ENCODE measurements at regions of chr7 and their contacts with region 1.

Region 1: GRCh38 chr7:36677769-36678437 is 46.4 kb downstream of the AOAH start:
- DNase-seq: peak in 2 of 5 donors; percentile 10 to 11
- H3K4me3 ChIP-seq: no peak overlapping the region
- H3K4me3 Mint-ChIP-seq: peak overlapping the region in 7 of 8 donors; percentile 55 to 84 (median 68)
- H3K27ac ChIP-seq: no peak overlapping the region
- H3K27ac Mint-ChIP-seq: peak overlapping the region; percentile 79 to 96 (median 89)
- H3K4me1 ChIP-seq: peaks cover 16% of the 10 kb centered on the region
- H3K4me1 Mint-ChIP-seq: peaks cover 18 to 39% (median 28%) of the 10 kb centered on the region in 4 donors
- H3K27me3 ChIP-seq: no peaks in the 10 kb centered on the region
- H3K27me3 Mint-ChIP-seq: no peaks in the 10 kb centered on the region

Region 2: GRCh38 chr7:36653008-36653670 is 24.8 kb before region 1 on chr7:
- CTCF ChIA-PET with region 1: no interaction called
- POLR2A ChIA-PET with region 1: no interaction called
- intact Hi-C with region 1: no loop called
- DNase-seq: no peak
- H3K4me3 ChIP-seq: no peak overlapping the region
- H3K4me3 Mint-ChIP-seq: no peak overlapping the region
- H3K27ac ChIP-seq: no peak overlapping the region
- H3K27ac Mint-ChIP-seq: peak overlapping the region in 1 of 7 donors; percentile 25
- H3K4me1 ChIP-seq: no peaks in the 10 kb centered on the region
- H3K4me1 Mint-ChIP-seq: peaks cover 0 to 22% (median 3%) of the 10 kb centered on the region in 4 donors
- H3K27me3 ChIP-seq: no peaks in the 10 kb centered on the region
- H3K27me3 Mint-ChIP-seq: no peaks in the 10 kb centered on the region

Region 3: DNA sequence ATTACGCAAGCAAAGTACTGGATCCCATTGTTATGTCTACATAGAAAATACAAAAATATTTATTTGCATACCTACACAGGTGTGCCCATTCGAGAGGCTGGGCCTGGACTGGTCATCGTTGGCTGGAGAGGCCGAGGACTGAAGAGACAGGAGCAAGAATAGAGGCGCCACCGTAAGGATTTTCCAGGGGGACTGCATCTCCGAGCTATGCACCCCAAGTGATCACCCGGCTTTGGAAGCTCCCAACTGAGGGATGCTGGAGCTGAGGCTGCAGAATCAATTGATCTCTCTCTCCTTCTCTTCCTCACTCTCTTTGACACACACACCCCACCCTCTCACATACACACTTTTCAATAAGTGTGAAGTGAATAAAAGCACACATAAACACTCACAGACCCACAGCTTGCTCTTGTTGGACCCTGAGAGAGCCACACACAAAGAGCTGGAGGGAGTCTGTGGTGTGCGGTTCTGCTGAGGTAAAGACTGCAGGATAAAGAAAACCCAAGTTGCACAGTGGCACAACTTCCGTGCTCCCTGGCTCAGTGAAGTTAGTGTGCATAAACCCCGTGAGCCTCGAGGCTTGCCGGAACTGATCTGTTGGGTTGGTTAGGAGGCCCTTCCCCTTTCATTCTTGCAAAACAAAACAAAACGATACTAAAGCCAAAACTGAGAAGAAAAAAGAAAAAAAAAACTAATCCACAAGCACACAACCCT is 46.2 kb after region 1 on chr7 and contains the start of gene AOAH:
- CTCF ChIA-PET with region 1: interaction called, 5 read pairs
- POLR2A ChIA-PET with region 1: interaction called, 14 read pairs
- intact Hi-C with region 1: loop called (anchors 2 kb)
- DNase-seq: peak; percentile 81 to 87 (median 82)
- H3K4me3 ChIP-seq: peak within 1 kb of the TSS in 1 of 2 donors; percentile 34
- H3K4me3 Mint-ChIP-seq: peak within 1 kb of the TSS; percentile 57 to 91 (median 83)
- H3K27ac ChIP-seq: peak within 1 kb of the TSS; percentile 37
- H3K27ac Mint-ChIP-seq: peak within 1 kb of the TSS; percentile 78 to 95 (median 91)
- H3K4me1 ChIP-seq: peaks cover 72% of the 10 kb centered on the region
- H3K4me1 Mint-ChIP-seq: peaks cover 54 to 83% (median 67%) of the 10 kb centered on the region in 4 donors
- H3K27me3 ChIP-seq: no peaks in the 10 kb centered on the region
- H3K27me3 Mint-ChIP-seq: no peaks in the 10 kb centered on the region
- total RNA-seq, gene AOAH: 4.5 to 5.4 TPM

Region 4: GRCh38 chr7:36749282-36749960 is 71.5 kb after region 1 on chr7:
- CTCF ChIA-PET with region 1: no interaction called
- POLR2A ChIA-PET with region 1: no interaction called
- intact Hi-C with region 1: no loop called
- DNase-seq: no peak
- H3K4me3 ChIP-seq: no peak overlapping the region
- H3K4me3 Mint-ChIP-seq: no peak overlapping the region
- H3K27ac ChIP-seq: no peak overlapping the region
- H3K27ac Mint-ChIP-seq: peak overlapping the region in 2 of 7 donors; percentile 0 to 23
- H3K4me1 ChIP-seq: no peaks in the 10 kb centered on the region
- H3K4me1 Mint-ChIP-seq: peaks cover 5 to 14% (median 9%) of the 10 kb centered on the region in 4 donors
- H3K27me3 ChIP-seq: no peaks in the 10 kb centered on the region
- H3K27me3 Mint-ChIP-seq: peaks cover 0 to 2% of the 10 kb centered on the region in 2 donors

Region 5: GRCh38 chr7:37031571-37032257 is 353.8 kb after region 1 on chr7:
- CTCF ChIA-PET with region 1: no interaction called
- POLR2A ChIA-PET with region 1: no interaction called
- intact Hi-C with region 1: no loop called
- DNase-seq: no peak
- H3K4me3 ChIP-seq: no peak overlapping the region
- H3K4me3 Mint-ChIP-seq: peak overlapping the region in 1 of 8 donors; percentile 9
- H3K27ac ChIP-seq: no peak overlapping the region
- H3K27ac Mint-ChIP-seq: peak overlapping the region in 3 of 7 donors; percentile 20 to 62 (median 54)
- H3K4me1 ChIP-seq: peaks cover 8% of the 10 kb centered on the region
- H3K4me1 Mint-ChIP-seq: peaks cover 35 to 43% (median 37%) of the 10 kb centered on the region in 4 donors
- H3K27me3 ChIP-seq: no peaks in the 10 kb centered on the region
- H3K27me3 Mint-ChIP-seq: no peaks in the 10 kb centered on the region

Region 6: GRCh38 chr7:37467002-37467401 is 789.1 kb after region 1 on chr7:
- CTCF ChIA-PET with region 1: no interaction called
- POLR2A ChIA-PET with region 1: no interaction called
- intact Hi-C with region 1: no loop called
- DNase-seq: no peak
- H3K4me3 ChIP-seq: no peak overlapping the region
- H3K4me3 Mint-ChIP-seq: no peak overlapping the region
- H3K27ac ChIP-seq: no peak overlapping the region
- H3K27ac Mint-ChIP-seq: no peak overlapping the region
- H3K4me1 ChIP-seq: no peaks in the 10 kb centered on the region
- H3K4me1 Mint-ChIP-seq: no peaks in the 10 kb centered on the region
- H3K27me3 ChIP-seq: no peaks in the 10 kb centered on the region
- H3K27me3 Mint-ChIP-seq: peaks cover 9 to 15% of the 10 kb centered on the region in 2 donors

Measured in CD4-positive, alpha-beta memory T cell (primary cell).